ENCODE measurements at regions of chr16 and their contacts with region 1.

Region 1: DNA sequence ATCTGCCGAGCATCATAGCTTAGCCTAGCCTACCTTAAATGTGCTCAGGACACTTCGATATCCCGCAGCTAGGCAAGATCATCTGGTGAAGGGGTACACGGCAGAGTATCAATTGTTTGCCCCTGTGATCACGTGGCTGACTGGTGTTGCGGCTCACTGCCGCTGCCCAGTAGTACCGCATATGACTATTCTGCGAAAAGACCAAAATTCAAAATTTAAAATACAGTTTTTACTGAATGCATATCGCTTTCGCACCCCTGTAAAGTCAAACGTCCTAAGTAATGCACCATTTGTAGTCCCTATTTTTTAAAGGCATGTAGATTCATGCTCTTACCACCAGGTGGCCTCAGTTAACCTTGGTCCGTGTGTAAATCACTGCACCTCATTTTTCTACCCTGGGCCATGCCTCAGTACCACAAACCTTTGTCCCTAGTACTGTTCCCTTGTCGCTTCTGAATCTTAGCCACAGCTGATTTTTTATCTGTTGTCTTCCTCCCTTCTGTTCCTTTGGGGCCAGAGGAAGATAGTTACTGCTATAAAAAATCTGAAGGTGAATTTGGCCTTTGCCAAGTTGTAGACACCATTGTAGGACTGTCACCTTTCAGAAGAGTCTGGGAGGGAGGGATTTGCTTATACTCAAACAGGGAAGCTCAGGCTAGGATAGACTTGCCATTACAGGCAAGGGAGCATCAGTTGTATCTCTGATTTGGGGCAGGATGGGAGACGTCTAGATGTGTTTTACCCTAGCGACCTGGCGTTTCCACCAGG is 34.4 kb downstream of the WWP2 start:
- DNase-seq: peak in 1 of 2 donors; percentile 89
- H3K4me3 ChIP-seq: peak overlapping the region in 1 of 4 donors; percentile 2
- H3K27ac ChIP-seq: no peak overlapping the region
- H3K4me1 ChIP-seq: peaks cover 0 to 11% (median 7%) of the 10 kb centered on the region in 4 donors
- H3K27me3 ChIP-seq: no peaks in the 10 kb centered on the region
- CTCF ChIP-seq: peak in 6 of 7 experiments; percentile 11 to 97 (median 91)
- EP300 ChIP-seq: no peak
- POLR2A ChIP-seq: no peak

Region 2: GRCh38 chr16:69880640-69881133 is 84.2 kb after region 1 on chr16:
- intact Hi-C with region 1: no loop called
- DNase-seq: no peak
- H3K4me3 ChIP-seq: no peak overlapping the region
- H3K27ac ChIP-seq: no peak overlapping the region
- H3K4me1 ChIP-seq: peaks cover 5 to 9% (median 7%) of the 10 kb centered on the region in 4 donors
- H3K27me3 ChIP-seq: no peaks in the 10 kb centered on the region
- CTCF ChIP-seq: no peak
- EP300 ChIP-seq: no peak
- POLR2A ChIP-seq: no peak

Region 3: DNA sequence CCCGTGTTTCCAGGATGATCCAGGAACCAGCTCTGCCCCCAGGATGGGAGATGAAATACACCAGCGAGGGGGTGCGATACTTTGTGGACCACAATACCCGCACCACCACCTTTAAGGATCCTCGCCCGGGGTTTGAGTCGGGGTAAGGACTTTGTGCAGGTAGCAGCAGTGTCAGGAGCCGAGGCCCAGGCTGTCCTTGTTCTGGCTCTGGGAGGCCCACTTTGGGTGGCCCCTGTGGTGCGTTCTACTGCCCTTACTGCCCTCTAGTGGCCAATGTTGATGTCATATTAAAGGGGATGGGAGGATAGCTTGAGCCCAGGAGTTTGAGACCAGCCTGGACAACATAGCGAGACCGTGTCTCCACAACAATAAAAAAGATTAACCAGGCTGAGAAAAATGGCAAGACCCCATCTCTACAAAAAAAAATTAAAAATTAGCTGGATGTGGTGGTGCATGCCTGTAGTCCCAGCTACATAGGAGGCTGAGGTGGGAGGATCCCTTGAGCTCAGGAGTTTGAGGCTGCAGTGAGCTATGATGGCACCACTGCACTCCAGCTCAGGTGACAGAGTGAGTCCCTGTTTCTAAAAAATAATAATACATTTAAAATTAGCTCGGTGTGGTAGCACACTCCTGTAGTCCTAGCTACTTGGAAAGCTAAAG is 133.7 kb after region 1 on chr16:
- intact Hi-C with region 1: loop called (anchors 5 kb)
- DNase-seq: peak; percentile 45 to 84
- H3K4me3 ChIP-seq: no peak overlapping the region
- H3K27ac ChIP-seq: no peak overlapping the region
- H3K4me1 ChIP-seq: peaks cover 0 to 35% (median 12%) of the 10 kb centered on the region in 4 donors
- H3K27me3 ChIP-seq: no peaks in the 10 kb centered on the region
- CTCF ChIP-seq: peak in 5 of 7 experiments; percentile 28 to 70 (median 69)
- EP300 ChIP-seq: no peak
- POLR2A ChIP-seq: no peak